Heart left ventricle (tissue), 16 donors: ENCODE measurements at regions of chr3 and their contacts with region 1.

Region 1: GRCh38 chr3:51498876-51499738 is 708 bp downstream of the DCAF1 start:
- DNase-seq: peak; percentile 92 to 96 (median 95)
- ATAC-seq: peak; percentile 83 to 88 (median 85)
- H3K4me3 ChIP-seq: peak overlapping the region; percentile 63 to 97 (median 88)
- H3K27ac ChIP-seq: peak overlapping the region; percentile 62 to 99 (median 95)
- H3K4me1 ChIP-seq: peaks cover 0 to 21% (median 5%) of the 10 kb centered on the region in 12 donors
- H3K27me3 ChIP-seq: no peaks in the 10 kb centered on the region
- CTCF ChIP-seq: no peak
- POLR2A ChIP-seq: peak in 1 of 2 donors; percentile 20

Region 2: DNA sequence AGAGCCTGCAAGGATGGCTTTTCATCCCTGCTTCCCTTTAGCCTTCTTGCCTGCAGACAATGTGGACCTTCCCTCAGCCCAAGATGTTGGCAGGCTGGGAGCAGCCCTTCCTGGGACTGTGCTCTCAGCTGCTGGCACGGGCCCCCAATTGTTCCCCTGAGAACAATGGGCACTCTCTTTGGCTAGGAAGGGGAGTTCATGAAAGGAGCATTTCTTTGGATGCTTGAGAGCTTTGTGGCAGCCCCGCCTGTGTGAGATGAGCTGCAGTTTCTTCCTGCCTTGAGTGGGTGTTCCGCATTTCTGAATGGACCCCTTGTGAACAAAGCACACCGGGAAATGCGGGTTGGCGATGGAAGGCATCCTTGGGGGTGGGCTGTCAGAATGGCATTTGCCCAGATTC is 1979.8 kb before region 1 on chr3:
- intact Hi-C with region 1: no loop called
- DNase-seq: no peak
- ATAC-seq: peak in 2 of 4 donors; percentile 6 to 19
- H3K4me3 ChIP-seq: no peak overlapping the region
- H3K27ac ChIP-seq: peak overlapping the region in 1 of 12 donors; percentile 14
- H3K4me1 ChIP-seq: peaks cover 3 to 59% (median 17%) of the 10 kb centered on the region in 12 donors
- H3K27me3 ChIP-seq: no peaks in the 10 kb centered on the region
- CTCF ChIP-seq: no peak
- POLR2A ChIP-seq: no peak

Region 3: DNA sequence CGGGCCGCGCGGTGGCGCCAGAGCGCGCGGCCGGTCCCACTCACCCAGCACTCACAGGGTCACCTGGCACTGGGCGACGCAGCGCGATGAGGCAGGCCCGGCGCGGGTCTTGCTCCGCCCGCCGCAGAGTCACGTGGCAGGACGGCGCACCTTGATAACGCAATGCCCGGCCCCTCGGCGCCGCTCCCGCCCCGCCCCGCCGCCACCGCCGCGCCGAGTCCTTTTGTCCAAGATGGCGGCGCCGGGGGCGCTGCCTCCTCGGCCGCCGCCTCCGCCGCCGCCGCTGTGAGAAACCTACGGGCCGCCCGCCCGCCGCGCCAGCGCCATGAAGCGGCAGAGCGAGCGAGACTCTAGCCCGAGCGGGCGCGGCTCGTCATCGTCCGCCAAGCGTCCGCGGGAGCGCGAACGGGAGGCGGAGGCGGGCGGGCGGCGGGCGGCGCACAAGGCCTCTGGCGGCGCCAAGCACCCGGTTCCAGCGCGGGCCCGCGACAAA is 108.0 kb before region 1 on chr3 and contains the start of gene RBM15B:
- intact Hi-C with region 1: loop called in 4 of 10 experiments (anchors 2 to 10 kb)
- DNase-seq: peak; percentile 98 to 100 (median 99)
- ATAC-seq: peak; percentile 93 to 97 (median 94)
- H3K4me3 ChIP-seq: peak within 1 kb of the TSS; percentile 57 to 90 (median 74)
- H3K27ac ChIP-seq: peak within 1 kb of the TSS; percentile 78 to 95 (median 89)
- H3K4me1 ChIP-seq: peaks cover 21 to 87% (median 69%) of the 10 kb centered on the region in 12 donors
- H3K27me3 ChIP-seq: no peaks in the 10 kb centered on the region
- CTCF ChIP-seq: peak in 9 of 12 donors; percentile 85 to 97 (median 91)
- POLR2A ChIP-seq: peak in 1 of 2 donors; percentile 70
- total RNA-seq, gene RBM15B: 12.7 to 21.5 (median 16.2) TPM

Region 4: GRCh38 chr3:51538459-51539290 is 39.6 kb after region 1 on chr3 and contains the start of gene RAD54L2:
- intact Hi-C with region 1: loop called in 1 of 10 experiments (anchors 2 kb)
- DNase-seq: peak; percentile 85 to 93 (median 88)
- ATAC-seq: peak; percentile 93 to 98 (median 98)
- H3K4me3 ChIP-seq: peak within 1 kb of the TSS; percentile 77 to 100 (median 96)
- H3K27ac ChIP-seq: peak within 1 kb of the TSS; percentile 74 to 95 (median 88)
- H3K4me1 ChIP-seq: peaks cover 0 to 36% (median 18%) of the 10 kb centered on the region in 12 donors
- H3K27me3 ChIP-seq: no peaks in the 10 kb centered on the region
- CTCF ChIP-seq: peak in 7 of 12 donors; percentile 31 to 58 (median 34)
- POLR2A ChIP-seq: peak in 1 of 2 donors; percentile 63
- total RNA-seq, gene RAD54L2: 10.1 to 20.0 (median 13.3) TPM

Region 5: DNA sequence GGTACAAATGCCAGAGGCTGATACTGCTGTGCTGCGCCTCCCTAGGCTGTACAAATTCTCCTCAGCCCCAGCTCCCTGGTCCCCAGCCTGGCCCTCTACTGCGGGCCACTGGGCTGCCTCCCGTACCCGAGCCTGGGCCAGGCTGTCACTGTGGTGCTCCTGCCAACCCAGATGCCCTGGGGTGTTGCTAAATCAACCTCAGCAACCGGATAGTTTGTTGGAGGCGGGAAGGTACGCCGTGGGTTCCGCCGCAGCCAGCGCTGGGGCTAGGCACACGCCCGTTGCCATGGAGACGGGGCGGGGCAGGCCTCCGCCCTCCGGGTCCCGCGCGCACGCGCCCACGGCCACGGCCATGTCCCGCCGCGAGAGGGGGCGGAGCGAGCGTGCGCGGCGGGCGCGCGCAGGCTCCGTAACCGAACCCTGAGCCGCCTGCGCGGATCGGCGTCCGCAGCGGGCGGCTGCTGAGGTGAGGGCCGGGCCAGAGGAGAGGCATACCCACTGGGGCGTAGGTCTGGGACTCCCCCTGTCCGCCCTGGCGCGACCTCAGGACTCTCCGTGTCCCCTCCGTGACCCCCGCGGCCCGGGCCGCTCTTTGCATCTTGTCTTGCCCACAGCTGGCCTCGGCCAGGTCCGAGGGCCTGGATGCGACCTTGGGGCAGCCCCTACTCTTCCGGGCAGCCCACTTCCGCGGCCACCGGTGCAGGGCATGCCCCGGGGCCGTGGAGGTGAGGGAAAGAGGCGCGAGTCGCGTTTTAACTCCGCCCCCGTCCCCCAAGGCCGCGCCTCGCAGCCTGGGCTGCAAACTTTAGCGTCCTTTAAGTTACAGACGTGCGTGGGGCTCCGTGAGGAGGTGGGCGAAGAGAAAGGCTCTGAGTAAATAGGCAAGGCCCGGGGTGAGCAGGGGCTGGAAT is 172.0 kb after region 1 on chr3 and contains the start of gene TEX264:
- intact Hi-C with region 1: loop called (anchors 1 to 5 kb)
- DNase-seq: peak; percentile 91 to 97 (median 94)
- ATAC-seq: peak; percentile 63 to 95 (median 91)
- H3K4me3 ChIP-seq: peak within 1 kb of the TSS; percentile 72 to 97 (median 86)
- H3K27ac ChIP-seq: peak within 1 kb of the TSS; percentile 84 to 99 (median 96)
- H3K4me1 ChIP-seq: peaks cover 2 to 64% (median 36%) of the 10 kb centered on the region in 12 donors
- H3K27me3 ChIP-seq: no peaks in the 10 kb centered on the region
- CTCF ChIP-seq: no peak
- POLR2A ChIP-seq: peak in 1 of 2 donors; percentile 89
- total RNA-seq, gene TEX264: 29.5 to 64.0 (median 36.9) TPM

Region 6: GRCh38 chr3:51682079-51682478 is 183.0 kb after region 1 on chr3:
- intact Hi-C with region 1: loop called in 5 of 10 experiments (anchors 1 to 5 kb)
- DNase-seq: peak; percentile 25 to 81 (median 78)
- ATAC-seq: peak; percentile 71 to 76 (median 72)
- H3K4me3 ChIP-seq: peak overlapping the region in 1 of 12 donors; percentile 17
- H3K27ac ChIP-seq: peak overlapping the region in 10 of 12 donors; percentile 27 to 92 (median 58)
- H3K4me1 ChIP-seq: peaks cover 22 to 93% (median 79%) of the 10 kb centered on the region in 12 donors
- H3K27me3 ChIP-seq: no peaks in the 10 kb centered on the region
- CTCF ChIP-seq: peak; percentile 70 to 83 (median 79)
- POLR2A ChIP-seq: no peak

Region 7: DNA sequence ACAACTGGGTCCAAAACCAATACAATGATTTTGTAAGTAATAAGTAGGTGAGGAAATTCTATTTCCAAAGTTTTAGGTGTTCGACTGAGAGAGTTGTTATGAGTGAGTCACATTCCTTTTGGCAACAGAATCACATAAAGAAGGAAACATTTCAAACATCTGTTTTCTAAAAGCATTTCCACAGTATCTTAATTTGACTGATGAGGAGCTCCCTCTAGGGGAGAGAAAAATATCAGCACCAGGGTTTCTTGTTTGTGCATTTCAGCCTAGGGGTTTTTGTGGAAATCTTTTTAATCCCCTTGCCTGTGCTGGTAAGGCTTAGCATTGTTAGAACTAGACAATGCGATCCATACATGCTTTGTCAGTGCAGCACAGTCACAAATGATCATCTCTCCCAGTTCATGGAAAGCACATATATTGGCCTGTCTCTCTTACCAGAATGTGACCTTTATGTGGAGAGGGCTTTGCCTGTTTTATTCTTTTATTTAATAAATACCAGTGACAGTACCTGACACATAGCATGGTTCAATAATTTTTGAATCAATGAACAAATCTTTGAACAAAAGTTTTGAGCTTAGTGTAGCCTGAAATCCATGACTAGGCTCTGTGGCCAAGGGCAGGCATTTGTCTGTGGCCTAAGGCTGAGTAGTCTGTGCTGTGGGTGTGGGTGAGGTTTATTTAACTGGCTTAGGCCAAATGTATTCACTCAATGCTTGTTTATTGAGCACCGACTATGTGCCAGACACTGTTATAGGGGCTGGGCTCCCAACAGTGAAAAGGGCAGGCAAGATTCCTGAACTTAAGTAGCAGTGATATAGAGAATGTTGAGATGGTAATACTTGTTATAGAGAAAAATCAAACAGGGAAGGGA is 301.0 kb after region 1 on chr3:
- intact Hi-C with region 1: loop called (anchors 2 to 5 kb)
- DNase-seq: no peak
- ATAC-seq: peak in 2 of 4 donors; percentile 38 to 57
- H3K4me3 ChIP-seq: no peak overlapping the region
- H3K27ac ChIP-seq: no peak overlapping the region
- H3K4me1 ChIP-seq: no peaks in the 10 kb centered on the region
- H3K27me3 ChIP-seq: peaks cover 0 to 34% (median 0%) of the 10 kb centered on the region in 9 donors
- CTCF ChIP-seq: peak; percentile 69 to 92 (median 81)
- POLR2A ChIP-seq: no peak